ENCODE measurements at regions of chr1 and their contacts with region 1.

Region 1: DNA sequence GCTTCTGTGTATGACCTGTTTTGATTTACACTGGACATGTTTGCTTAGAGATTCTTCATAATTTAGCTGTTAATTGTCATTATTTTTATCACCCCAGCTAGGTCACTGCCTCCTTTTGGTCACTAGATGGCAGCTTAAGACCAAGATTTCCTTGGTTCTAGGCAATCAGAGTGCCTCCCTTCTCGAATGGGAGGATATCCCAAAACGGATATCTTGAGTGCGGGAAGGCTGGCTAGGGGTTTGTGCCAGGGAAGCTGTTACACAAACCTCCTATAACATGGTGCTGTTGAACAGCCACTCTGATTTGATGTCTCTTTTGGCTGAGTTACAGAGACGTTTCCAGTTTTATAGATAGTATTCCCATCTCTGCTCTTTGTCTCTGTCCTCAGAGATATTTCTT is 283.5 kb downstream of the S1PR1 start:
- DNase-seq: peak in 4 of 5 donors; percentile 1 to 30 (median 26)
- H3K4me3 ChIP-seq: no peak overlapping the region
- H3K4me3 Mint-ChIP-seq: no peak overlapping the region
- H3K27ac ChIP-seq: no peak overlapping the region
- H3K27ac Mint-ChIP-seq: no peak overlapping the region
- H3K4me1 ChIP-seq: peaks cover 5% of the 10 kb centered on the region
- H3K4me1 Mint-ChIP-seq: peaks cover 0 to 6% (median 2%) of the 10 kb centered on the region in 4 donors
- H3K27me3 ChIP-seq: no peaks in the 10 kb centered on the region
- H3K27me3 Mint-ChIP-seq: peaks cover 9 to 14% of the 10 kb centered on the region in 2 donors

Region 2: DNA sequence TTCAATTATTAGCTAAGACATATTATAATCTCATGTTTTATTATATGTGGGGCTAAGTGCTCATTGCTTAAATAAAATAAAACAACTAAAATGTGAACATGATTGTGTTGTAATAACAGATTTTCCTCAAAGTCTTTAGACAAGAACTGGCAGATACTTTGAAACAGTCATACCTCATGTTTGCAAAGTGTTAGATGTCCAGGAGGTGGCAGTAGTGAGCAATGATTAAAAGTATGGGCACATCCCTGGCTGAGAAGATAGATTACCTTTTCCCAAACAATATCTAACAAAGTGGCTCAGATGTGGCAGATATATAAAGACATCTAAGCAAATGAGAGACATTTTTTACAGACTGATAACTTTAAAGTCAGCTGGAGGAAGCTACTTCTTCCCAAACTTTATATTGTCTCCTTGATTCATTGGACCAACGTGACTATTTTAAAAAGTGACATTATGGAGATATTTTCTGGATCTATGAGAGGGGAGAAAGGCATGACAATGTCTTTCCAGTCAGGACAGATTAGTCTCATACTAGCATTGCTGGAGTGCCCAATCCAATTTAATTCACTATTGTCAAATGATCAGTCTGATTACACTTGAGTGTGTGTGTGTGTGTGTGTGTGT is 13.6 kb before region 1 on chr1:
- CTCF ChIA-PET with region 1: interaction called, 30 read pairs
- POLR2A ChIA-PET with region 1: no interaction called
- intact Hi-C with region 1: no loop called
- DNase-seq: peak; percentile 25 to 48 (median 37)
- H3K4me3 ChIP-seq: no peak overlapping the region
- H3K4me3 Mint-ChIP-seq: no peak overlapping the region
- H3K27ac ChIP-seq: no peak overlapping the region
- H3K27ac Mint-ChIP-seq: no peak overlapping the region
- H3K4me1 ChIP-seq: no peaks in the 10 kb centered on the region
- H3K4me1 Mint-ChIP-seq: peaks cover 0 to 2% (median 0%) of the 10 kb centered on the region in 4 donors
- H3K27me3 ChIP-seq: no peaks in the 10 kb centered on the region
- H3K27me3 Mint-ChIP-seq: no peaks in the 10 kb centered on the region

Region 3: DNA sequence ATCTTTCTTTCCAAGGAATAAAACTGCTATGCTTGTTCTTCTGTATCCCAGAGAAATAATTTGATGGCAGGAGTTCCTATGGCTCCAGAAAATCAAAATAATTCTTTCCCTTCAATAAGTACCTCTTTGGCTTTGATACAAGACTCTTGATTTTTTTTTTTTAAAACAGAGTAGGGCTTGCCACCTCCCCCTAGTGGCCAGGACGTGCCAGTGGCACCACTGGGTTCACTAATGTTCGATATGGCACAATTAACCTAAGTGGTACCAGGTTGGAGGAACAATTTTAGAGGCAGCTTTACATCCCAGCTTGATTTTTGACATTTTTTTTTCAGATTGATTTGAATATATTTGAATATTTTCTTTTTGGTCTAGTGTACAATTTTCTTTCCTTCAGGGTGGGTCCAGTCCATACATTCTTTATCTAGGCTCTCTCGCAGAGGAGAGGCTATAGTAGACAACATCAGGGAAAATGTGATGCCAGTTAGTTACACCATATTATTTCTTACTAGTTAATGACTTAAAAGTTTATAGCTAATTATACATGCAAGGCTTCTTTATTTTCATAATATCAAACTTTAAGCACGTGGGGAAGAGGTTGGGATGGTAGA is 47.4 kb after region 1 on chr1:
- CTCF ChIA-PET with region 1: interaction called, 9 read pairs
- POLR2A ChIA-PET with region 1: no interaction called
- intact Hi-C with region 1: loop called (anchors 1 kb)
- DNase-seq: peak; percentile 27 to 50 (median 41)
- H3K4me3 ChIP-seq: no peak overlapping the region
- H3K4me3 Mint-ChIP-seq: no peak overlapping the region
- H3K27ac ChIP-seq: no peak overlapping the region
- H3K27ac Mint-ChIP-seq: no peak overlapping the region
- H3K4me1 ChIP-seq: no peaks in the 10 kb centered on the region
- H3K4me1 Mint-ChIP-seq: no peaks in the 10 kb centered on the region
- H3K27me3 ChIP-seq: no peaks in the 10 kb centered on the region
- H3K27me3 Mint-ChIP-seq: peaks cover 15 to 16% of the 10 kb centered on the region in 2 donors